Uterus (tissue), 4 donors: ENCODE measurements at regions of chr7 and their contacts with region 1.

Region 1: DNA sequence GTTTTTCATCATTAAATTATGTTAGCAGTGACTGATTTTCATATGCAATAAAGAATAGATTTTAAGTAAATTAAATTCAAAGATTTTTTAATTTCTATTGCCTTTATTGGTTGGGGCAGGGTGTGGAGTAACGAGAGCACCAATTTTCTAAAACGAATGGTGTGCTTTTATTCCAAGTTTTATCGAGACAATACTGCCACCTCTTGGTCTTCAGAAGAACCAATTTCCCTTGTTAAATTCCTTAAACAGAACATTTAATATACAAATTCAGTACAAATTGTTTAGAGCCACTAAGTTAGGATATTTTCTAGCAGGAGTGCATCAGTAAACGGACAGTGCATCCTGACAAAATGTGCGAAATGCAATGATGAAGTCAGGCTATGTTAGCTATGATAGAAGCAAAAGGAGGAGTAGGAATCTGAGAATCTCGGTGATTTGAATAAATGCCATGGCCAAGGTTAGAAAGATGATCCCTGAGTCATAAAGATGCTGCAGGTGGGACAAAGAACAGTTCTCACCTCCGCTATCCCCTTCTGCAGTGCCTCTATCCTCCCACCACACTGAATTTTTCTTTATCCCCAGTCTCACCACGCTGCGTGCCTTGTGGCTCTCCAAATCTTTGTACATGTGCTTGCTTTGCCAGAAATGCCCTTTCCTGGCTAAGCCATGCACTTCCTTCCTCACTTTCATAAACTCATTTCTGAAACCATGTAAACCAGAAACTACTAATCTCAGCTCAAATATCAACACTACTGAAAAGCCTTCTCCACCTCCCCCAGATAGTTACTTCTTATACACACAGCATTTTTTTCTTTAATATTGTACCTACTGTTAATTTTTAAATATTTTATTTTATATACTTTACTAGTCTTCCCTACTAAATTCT is 31.9 kb upstream of the AGBL3 start:
- DNase-seq: no peak
- H3K4me3 ChIP-seq: no peak overlapping the region
- H3K27ac ChIP-seq: peak overlapping the region; percentile 18 to 55
- H3K4me1 ChIP-seq: no peaks in the 10 kb centered on the region
- H3K27me3 ChIP-seq: no peaks in the 10 kb centered on the region
- CTCF ChIP-seq: peak; percentile 48 to 73 (median 54)
- POLR2A ChIP-seq: no peak

Region 2: DNA sequence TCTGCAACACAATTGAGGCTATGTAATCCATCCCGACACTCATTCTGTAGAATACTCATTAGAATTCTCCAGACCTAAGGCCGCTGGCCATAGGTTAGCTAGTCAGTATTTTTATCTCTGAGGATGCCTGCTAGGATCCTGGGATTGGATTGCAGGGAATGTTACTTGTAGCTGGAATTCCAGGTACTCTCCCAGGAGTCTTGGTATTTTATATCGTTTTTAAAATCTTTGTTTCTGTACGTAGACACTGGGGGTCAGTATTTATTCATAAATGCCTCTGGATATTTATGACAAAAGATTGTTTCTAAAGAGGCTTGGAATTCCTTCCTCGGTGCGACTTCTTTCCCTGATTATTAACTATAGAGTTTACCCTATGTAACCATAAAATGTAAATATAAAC is 267.7 kb before region 1 on chr7:
- intact Hi-C with region 1: loop called (anchors 5 kb)
- DNase-seq: no peak
- H3K4me3 ChIP-seq: no peak overlapping the region
- H3K27ac ChIP-seq: no peak overlapping the region
- H3K4me1 ChIP-seq: peaks cover 6 to 7% of the 10 kb centered on the region in 2 donors
- H3K27me3 ChIP-seq: no peaks in the 10 kb centered on the region
- CTCF ChIP-seq: peak; percentile 53 to 57 (median 56)
- POLR2A ChIP-seq: no peak